Activated B cell treated with CpG ODN at 0.5 μM for 24 hours (primary cell): ENCODE measurements at regions of chr11 and their contacts with region 1.

Region 1: DNA sequence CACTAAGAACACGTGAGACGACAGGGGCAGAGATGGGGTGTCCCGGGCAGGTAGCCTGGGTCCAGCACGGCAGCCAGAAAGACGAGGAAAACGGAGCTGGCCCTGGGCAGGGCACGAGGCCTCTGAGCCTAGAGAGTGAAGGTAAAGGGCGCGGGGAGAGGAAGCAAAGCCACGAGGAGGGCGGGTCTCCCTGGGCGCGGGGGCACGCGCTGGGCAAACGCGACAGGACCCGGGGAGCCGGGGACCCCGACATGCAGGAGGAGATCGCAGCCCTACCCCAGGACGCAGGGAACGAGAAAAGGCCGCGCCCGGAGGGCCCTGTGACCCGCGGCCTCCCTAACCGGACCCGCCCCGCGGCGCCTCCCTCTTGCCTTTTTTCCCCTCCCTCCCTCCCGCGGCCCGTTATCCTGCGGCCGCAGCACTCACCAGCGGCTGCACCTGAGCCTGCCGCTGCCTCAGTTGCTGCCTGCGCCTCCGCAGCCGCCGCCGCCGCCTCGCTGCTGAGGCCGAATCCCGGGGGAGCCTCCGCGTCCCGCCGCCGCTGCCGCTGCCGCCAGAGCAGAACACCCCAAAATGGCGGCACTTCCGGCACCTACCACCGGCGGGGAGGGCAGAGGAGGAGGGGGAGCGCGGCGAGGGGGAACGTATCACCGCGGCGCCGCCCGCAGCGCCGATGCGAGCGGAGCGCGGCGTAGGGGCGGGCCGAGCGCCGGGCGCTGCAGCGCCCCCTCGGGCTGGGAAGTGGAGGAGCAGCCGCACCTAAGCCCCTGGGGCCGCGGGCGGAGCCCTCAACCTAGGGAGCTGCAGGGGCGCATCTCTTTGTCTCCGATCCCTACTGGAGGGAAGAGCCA is at the start of gene CELF1:
- DNase-seq: peak; percentile 93
- ATAC-seq: peak; percentile 94
- H3K4me3 Mint-ChIP-seq: peak within 1 kb of the TSS; percentile 96
- H3K27ac Mint-ChIP-seq: peak within 1 kb of the TSS; percentile 97
- H3K4me1 Mint-ChIP-seq: peaks cover 49% of the 10 kb centered on the region
- H3K27me3 Mint-ChIP-seq: no peaks in the 10 kb centered on the region
- CTCF ChIP-seq: peak; percentile 33
- total RNA-seq, gene CELF1: 129 and 136 TPM in 2 replicates

Region 2: DNA sequence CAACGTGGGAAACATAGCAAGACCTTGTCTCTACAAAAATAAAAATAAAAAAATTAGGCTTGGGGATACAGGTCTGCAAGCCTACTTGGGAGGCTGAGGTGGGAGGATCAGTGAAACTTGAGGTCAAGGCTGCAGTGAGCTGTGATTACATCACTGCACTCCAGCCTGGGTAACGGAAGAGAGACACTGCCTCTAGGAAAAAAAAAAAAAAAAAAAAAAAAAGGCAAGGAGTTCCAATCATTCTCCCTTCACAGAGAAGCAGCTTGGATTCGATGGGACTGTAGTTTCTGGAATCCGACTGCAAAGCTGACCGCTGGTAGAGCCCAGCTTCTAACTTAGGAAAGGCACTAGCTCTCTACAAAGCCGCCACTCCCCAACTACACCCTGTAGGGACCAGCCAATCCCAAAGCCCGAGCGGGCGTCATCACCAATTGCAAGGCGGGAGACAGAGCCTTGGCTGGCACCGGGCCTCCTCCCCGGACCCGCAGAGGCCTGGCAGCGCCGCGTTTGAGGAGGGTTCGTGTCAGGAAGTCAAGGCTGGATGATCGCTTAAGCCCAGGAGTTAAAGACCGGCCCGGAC is 338.7 kb before region 1 on chr11:
- CTCF ChIA-PET with region 1: no interaction called
- POLR2A ChIA-PET with region 1: interaction called, 6 read pairs
- intact Hi-C with region 1: loop called (anchors 1 kb)
- DNase-seq: peak; percentile 72
- ATAC-seq: peak; percentile 73
- H3K4me3 Mint-ChIP-seq: peak overlapping the region; percentile 99
- H3K27ac Mint-ChIP-seq: peak overlapping the region; percentile 100
- H3K4me1 Mint-ChIP-seq: peaks cover 35% of the 10 kb centered on the region
- H3K27me3 Mint-ChIP-seq: no peaks in the 10 kb centered on the region
- CTCF ChIP-seq: no peak

Region 3: GRCh38 chr11:47373876-47374720 is 178.7 kb before region 1 on chr11:
- CTCF ChIA-PET with region 1: interaction called, 4 read pairs
- POLR2A ChIA-PET with region 1: no interaction called
- intact Hi-C with region 1: loop called (anchors 5 kb)
- DNase-seq: peak; percentile 81
- ATAC-seq: no peak
- H3K4me3 Mint-ChIP-seq: no peak overlapping the region
- H3K27ac Mint-ChIP-seq: peak overlapping the region; percentile 70
- H3K4me1 Mint-ChIP-seq: peaks cover 54% of the 10 kb centered on the region
- H3K27me3 Mint-ChIP-seq: no peaks in the 10 kb centered on the region
- CTCF ChIP-seq: peak; percentile 83

Region 4: GRCh38 chr11:47538741-47539574 is 13.8 kb before region 1 on chr11:
- CTCF ChIA-PET with region 1: interaction called, 4 read pairs
- POLR2A ChIA-PET with region 1: interaction called, 12 read pairs
- intact Hi-C with region 1: loop called (anchors 1 kb)
- DNase-seq: no peak
- ATAC-seq: no peak
- H3K4me3 Mint-ChIP-seq: no peak overlapping the region
- H3K27ac Mint-ChIP-seq: peak overlapping the region; percentile 53
- H3K4me1 Mint-ChIP-seq: peaks cover 72% of the 10 kb centered on the region
- H3K27me3 Mint-ChIP-seq: no peaks in the 10 kb centered on the region
- CTCF ChIP-seq: no peak

Region 5: DNA sequence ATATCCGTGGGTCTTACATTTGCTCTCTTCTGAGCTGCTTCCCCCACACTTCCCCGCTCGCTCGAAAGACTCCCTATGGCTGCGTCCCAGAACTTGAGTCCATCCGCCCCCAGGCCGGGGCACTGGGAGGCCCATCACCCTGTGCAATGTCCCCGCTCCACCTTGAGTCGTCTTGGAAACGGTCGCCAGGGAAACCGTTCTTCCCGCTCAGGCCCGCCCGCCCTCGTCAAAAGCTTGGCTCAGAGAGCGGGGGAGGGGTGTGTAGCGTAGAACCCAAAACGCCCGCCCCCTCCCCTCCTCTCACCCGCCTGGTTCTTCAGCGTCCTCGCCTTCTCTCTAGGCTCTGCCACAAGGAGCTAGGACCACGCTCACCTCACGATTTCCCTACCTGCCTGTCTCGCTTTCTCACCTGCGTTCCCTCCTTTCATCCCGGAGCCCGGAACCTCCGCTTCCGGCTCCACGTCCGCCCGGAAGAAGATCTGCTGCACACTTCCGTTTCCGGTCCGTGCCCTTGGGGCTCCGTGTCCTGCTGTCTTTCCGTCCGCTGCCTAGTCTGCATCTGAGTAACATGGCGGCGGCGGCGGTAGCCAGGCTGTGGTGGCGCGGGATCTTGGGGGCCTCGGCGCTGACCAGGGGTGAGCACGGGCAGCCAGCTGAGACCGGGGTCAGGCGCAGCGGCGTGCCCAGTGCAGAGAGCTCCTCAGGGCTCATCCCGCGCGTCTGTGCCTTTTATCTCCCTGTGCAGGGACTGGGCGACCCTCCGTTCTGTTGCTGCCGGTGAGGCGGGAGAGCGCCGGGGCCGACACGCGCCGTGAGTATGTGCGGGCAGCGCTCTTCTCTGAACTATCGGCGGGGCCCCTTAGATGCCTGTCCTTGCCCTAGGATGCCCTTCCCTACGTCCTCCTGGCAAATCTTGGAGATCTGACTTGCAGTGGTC is 26.0 kb after region 1 on chr11 and contains the starts of genes KBTBD4 and NDUFS3:
- CTCF ChIA-PET with region 1: no interaction called
- POLR2A ChIA-PET with region 1: interaction called, 13 read pairs
- intact Hi-C with region 1: loop called (anchors 1 kb)
- DNase-seq: peak; percentile 90
- ATAC-seq: peak; percentile 93
- H3K4me3 Mint-ChIP-seq: peak within 1 kb of the TSS; percentile 99
- H3K27ac Mint-ChIP-seq: peak within 1 kb of the TSS; percentile 97
- H3K4me1 Mint-ChIP-seq: peaks cover 38% of the 10 kb centered on the region
- H3K27me3 Mint-ChIP-seq: no peaks in the 10 kb centered on the region
- CTCF ChIP-seq: no peak
- total RNA-seq, gene KBTBD4: 19.5 and 20.4 TPM in 2 replicates
- total RNA-seq, gene NDUFS3: 95.9 and 102 TPM in 2 replicates

Region 6: GRCh38 chr11:47593934-47594855 is 41.4 kb after region 1 on chr11 and contains the start of gene C1QTNF4:
- CTCF ChIA-PET with region 1: no interaction called
- POLR2A ChIA-PET with region 1: no interaction called
- intact Hi-C with region 1: no loop called
- DNase-seq: no peak
- ATAC-seq: peak; percentile 40
- H3K4me3 Mint-ChIP-seq: peak within 1 kb of the TSS; percentile 28
- H3K27ac Mint-ChIP-seq: no peak within 1 kb of the TSS
- H3K4me1 Mint-ChIP-seq: peaks cover 17% of the 10 kb centered on the region
- H3K27me3 Mint-ChIP-seq: peaks cover 32% of the 10 kb centered on the region
- CTCF ChIP-seq: no peak
- total RNA-seq, gene C1QTNF4: not detected in 2 replicates

Region 7: GRCh38 chr11:47715082-47715669 is 162.4 kb after region 1 on chr11 and contains the start of gene AGBL2:
- CTCF ChIA-PET with region 1: no interaction called
- POLR2A ChIA-PET with region 1: interaction called, 7 read pairs
- intact Hi-C with region 1: loop called (anchors 2 kb)
- DNase-seq: peak; percentile 82
- ATAC-seq: peak; percentile 99
- H3K4me3 Mint-ChIP-seq: peak within 1 kb of the TSS; percentile 96
- H3K27ac Mint-ChIP-seq: peak within 1 kb of the TSS; percentile 97
- H3K4me1 Mint-ChIP-seq: peaks cover 11% of the 10 kb centered on the region
- H3K27me3 Mint-ChIP-seq: no peaks in the 10 kb centered on the region
- CTCF ChIP-seq: no peak
- total RNA-seq, gene AGBL2: 7.0 and 8.2 TPM in 2 replicates

Region 8: DNA sequence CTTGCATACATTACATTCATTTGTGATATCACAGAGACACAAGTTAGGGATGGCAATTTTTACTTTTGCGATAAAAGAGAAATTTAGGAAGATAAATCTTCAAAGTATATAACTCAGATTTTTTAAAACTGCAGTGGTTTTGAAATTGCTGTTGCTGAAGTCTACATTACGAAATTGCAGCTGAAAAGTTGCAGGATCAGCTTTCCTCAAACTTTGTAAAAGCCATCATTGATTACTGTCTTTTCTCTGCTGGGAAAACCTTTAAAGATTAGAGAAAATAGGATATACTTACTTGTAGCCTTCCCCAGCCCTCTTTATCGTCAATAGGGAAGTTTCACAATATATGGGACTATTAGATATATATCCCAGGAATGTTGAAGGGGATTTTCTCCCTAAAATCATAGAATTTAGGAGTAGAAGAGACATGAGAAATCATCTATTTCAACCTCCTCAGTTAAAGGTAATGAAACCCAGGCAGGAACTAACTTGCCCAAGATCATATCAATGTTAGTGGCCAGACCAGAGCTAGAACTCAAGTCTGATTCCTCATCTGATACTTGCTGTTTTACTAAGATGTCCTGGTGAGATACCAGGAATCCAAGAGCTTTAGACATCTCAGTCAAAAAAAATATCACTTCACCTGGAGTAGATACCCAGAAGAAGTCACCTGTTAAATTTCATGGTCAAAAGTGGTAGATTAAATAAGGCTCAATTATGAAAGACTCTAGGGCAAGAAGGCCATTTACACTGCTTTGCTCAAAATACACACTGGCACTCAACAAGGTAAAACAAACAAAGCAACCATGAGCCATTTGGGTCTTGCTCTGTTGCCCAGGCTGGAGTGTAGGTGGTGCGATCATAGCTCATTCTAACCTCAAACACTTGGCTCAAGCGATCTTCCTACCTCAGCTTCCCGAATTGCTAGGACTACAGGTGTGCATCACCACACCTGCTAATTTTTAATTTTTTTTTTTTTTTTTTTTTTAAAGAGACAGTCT is 173.0 kb after region 1 on chr11:
- CTCF ChIA-PET with region 1: no interaction called
- POLR2A ChIA-PET with region 1: no interaction called
- intact Hi-C with region 1: no loop called
- DNase-seq: no peak
- ATAC-seq: no peak
- H3K4me3 Mint-ChIP-seq: no peak overlapping the region
- H3K27ac Mint-ChIP-seq: no peak overlapping the region
- H3K4me1 Mint-ChIP-seq: no peaks in the 10 kb centered on the region
- H3K27me3 Mint-ChIP-seq: no peaks in the 10 kb centered on the region
- CTCF ChIP-seq: no peak

Region 9: GRCh38 chr11:47847892-47848635 is 295.3 kb after region 1 on chr11 and contains the start of gene NUP160:
- CTCF ChIA-PET with region 1: no interaction called
- POLR2A ChIA-PET with region 1: no interaction called
- intact Hi-C with region 1: loop called (anchors 2 kb)
- DNase-seq: peak; percentile 92
- ATAC-seq: peak; percentile 83
- H3K4me3 Mint-ChIP-seq: peak within 1 kb of the TSS; percentile 98
- H3K27ac Mint-ChIP-seq: peak within 1 kb of the TSS; percentile 97
- H3K4me1 Mint-ChIP-seq: peaks cover 67% of the 10 kb centered on the region
- H3K27me3 Mint-ChIP-seq: no peaks in the 10 kb centered on the region
- CTCF ChIP-seq: no peak
- total RNA-seq, gene NUP160: 53.2 and 70.8 TPM in 2 replicates